ENCODE measurements at regions of chr6 and their contacts with region 1.

Region 1: GRCh38 chr6:126170978-126171382 is 168.9 kb upstream of the CENPW start:
- DNase-seq: peak; percentile 26
- ATAC-seq: 0 out of 2 replicates have a peak, but pooled peaks have one; percentile 35
- H3K4me3 ChIP-seq: no peak overlapping the region
- H3K27ac ChIP-seq: no peak overlapping the region
- H3K4me1 ChIP-seq: no peaks in the 10 kb centered on the region
- H3K27me3 ChIP-seq: peaks cover 12% of the 10 kb centered on the region
- CTCF ChIP-seq: peak; percentile 49
- POLR2A ChIP-seq: no peak
- RAD21 ChIP-seq: peak; percentile 38

Region 2: DNA sequence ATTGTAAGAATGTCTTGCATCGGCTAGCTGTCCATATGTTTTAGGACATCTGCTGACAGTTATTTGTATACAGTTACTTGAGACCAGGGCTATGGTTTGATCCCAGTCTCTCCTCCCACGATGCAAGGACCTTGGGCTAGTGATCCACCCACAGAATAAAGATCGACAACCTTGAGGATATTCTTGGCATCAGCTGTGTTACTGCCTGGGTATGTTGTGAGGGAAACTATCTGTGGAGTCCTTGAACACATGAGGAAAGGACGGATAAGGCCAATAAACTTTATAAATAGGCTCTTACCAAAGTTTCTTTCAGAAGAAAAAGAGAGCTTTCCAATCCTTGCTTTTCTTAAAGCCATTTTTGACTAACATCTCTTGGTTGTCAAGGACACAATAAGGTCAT is 492.4 kb before region 1 on chr6:
- CTCF ChIA-PET with region 1: no interaction called
- POLR2A ChIA-PET with region 1: no interaction called
- dilution Hi-C with region 1: no loop called
- in situ Hi-C with region 1: no loop called
- intact Hi-C with region 1: no loop called
- DNase-seq: no peak
- ATAC-seq: no peak
- H3K4me3 ChIP-seq: no peak overlapping the region
- H3K27ac ChIP-seq: no peak overlapping the region
- H3K4me1 ChIP-seq: no peaks in the 10 kb centered on the region
- H3K27me3 ChIP-seq: no peaks in the 10 kb centered on the region
- CTCF ChIP-seq: no peak
- POLR2A ChIP-seq: no peak
- RAD21 ChIP-seq: no peak

Region 3: DNA sequence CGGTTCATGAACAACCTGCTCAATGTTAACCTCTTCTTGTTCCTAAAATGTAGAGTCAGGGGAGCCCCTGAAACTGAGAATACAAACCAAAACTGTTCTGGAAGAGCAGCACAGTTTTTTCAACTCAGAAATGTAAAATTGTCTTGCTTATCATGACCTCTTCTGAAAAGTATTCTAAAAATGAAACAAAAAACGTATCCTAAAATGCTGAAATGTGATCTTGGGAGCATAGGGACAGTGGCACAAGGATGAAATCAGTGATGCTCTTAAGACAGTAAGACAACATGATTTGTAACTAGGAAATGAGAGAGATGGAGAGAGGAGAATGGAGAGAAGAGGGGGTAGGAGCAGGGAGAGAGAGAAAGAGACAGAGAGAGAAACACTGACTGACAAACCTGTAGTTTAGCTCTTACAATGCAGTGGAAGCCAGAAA is 352.7 kb before region 1 on chr6:
- CTCF ChIA-PET with region 1: no interaction called
- POLR2A ChIA-PET with region 1: interaction called, 18 read pairs
- dilution Hi-C with region 1: no loop called
- in situ Hi-C with region 1: no loop called
- intact Hi-C with region 1: no loop called
- DNase-seq: peak; percentile 17
- ATAC-seq: peak; percentile 69
- H3K4me3 ChIP-seq: no peak overlapping the region; the same call in 1 of the 2 replicates
- H3K27ac ChIP-seq: no peak overlapping the region
- H3K4me1 ChIP-seq: peaks cover 17% of the 10 kb centered on the region
- H3K27me3 ChIP-seq: no peaks in the 10 kb centered on the region
- CTCF ChIP-seq: no peak
- POLR2A ChIP-seq: no peak
- RAD21 ChIP-seq: no peak